ENCODE measurements at regions of chr1 and their contacts with region 1.

Region 1: GRCh38 chr1:26787706-26788514 is at the start of gene PIGV:
- DNase-seq: peak; percentile 93
- H3K4me3 ChIP-seq: peak within 1 kb of the TSS; percentile 51 to 76 (median 69)
- H3K27ac ChIP-seq: peak within 1 kb of the TSS; percentile 94 to 99 (median 96)
- H3K4me1 ChIP-seq: peaks cover 0 to 60% (median 48%) of the 10 kb centered on the region in 4 donors
- H3K27me3 ChIP-seq: no peaks in the 10 kb centered on the region
- CTCF ChIP-seq: peak in 2 of 4 experiments; percentile 42 to 47
- EP300 ChIP-seq: no peak
- POLR2A ChIP-seq: peak; percentile 90
- total RNA-seq, gene PIGV: 9.6 to 24.9 (median 14.1) TPM

Region 2: GRCh38 chr1:26500488-26501175 is 287.3 kb before region 1 on chr1:
- intact Hi-C with region 1: loop called (anchors 5 kb)
- DNase-seq: peak; percentile 92
- H3K4me3 ChIP-seq: peak overlapping the region; percentile 60 to 68 (median 63)
- H3K27ac ChIP-seq: peak overlapping the region; percentile 85 to 96 (median 89)
- H3K4me1 ChIP-seq: peaks cover 3 to 17% (median 9%) of the 10 kb centered on the region in 4 donors
- H3K27me3 ChIP-seq: no peaks in the 10 kb centered on the region
- CTCF ChIP-seq: no peak
- EP300 ChIP-seq: no peak
- POLR2A ChIP-seq: no peak

Region 3: DNA sequence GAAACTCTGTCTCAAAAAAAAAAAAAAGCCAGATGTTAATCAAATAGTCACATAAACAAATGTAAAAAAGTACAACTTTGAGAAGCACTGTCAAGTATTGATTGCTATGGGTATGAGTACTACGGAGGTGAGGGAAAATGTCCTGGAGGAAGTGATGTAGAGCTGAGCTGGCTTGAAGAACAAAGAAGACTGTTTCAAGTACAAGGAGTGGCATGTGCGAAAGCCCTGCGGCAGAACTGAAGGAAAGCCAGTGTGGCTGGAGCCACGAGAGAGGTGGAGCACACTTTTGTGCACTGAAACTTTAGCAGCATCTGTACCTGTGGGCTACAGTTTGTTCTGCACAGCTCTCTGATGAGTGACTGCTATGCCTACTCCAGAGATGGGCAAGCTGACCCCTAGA is 263.7 kb before region 1 on chr1:
- intact Hi-C with region 1: no loop called
- DNase-seq: no peak
- H3K4me3 ChIP-seq: no peak overlapping the region
- H3K27ac ChIP-seq: no peak overlapping the region
- H3K4me1 ChIP-seq: no peaks in the 10 kb centered on the region
- H3K27me3 ChIP-seq: peaks cover 0 to 15% (median 0%) of the 10 kb centered on the region in 3 donors
- CTCF ChIP-seq: no peak
- EP300 ChIP-seq: no peak
- POLR2A ChIP-seq: no peak

Region 4: DNA sequence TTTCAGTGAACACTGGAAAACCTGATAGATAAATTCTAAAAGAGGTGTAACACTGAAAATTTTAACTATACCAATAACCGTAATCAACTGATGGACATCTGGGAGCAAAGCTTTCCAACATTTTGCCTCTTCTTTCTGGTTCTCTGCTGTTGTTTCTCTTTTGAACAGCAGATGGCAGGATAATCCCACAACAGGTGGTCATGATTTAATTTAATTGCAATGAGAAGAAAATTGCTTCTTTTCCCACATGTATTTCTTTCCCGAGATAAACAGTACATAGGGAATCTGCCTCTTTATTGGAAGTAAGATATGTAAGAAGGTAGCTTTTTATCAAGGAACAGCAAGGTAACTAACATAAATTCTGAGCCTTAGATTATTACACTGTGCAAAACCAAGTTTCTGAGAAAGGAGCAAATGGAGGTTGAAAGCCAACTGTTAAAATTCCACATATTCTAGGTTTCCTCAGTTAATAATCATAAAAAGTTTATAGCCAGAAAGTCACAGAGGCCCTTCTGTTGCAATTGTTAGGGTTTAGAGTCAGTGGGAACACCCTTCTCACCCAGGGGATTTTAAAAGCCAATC is 185.4 kb before region 1 on chr1:
- intact Hi-C with region 1: loop called (anchors 1 kb)
- DNase-seq: no peak
- H3K4me3 ChIP-seq: no peak overlapping the region
- H3K27ac ChIP-seq: peak overlapping the region in 1 of 4 donors; percentile 51
- H3K4me1 ChIP-seq: no peaks in the 10 kb centered on the region
- H3K27me3 ChIP-seq: no peaks in the 10 kb centered on the region
- CTCF ChIP-seq: peak; percentile 79 to 93 (median 87)
- EP300 ChIP-seq: no peak
- POLR2A ChIP-seq: no peak

Region 5: GRCh38 chr1:26677306-26678115 is 110.4 kb before region 1 on chr1:
- intact Hi-C with region 1: loop called (anchors 1 kb)
- DNase-seq: peak; percentile 91
- H3K4me3 ChIP-seq: peak overlapping the region in 3 of 4 donors; percentile 5 to 16 (median 13)
- H3K27ac ChIP-seq: peak overlapping the region; percentile 49 to 56 (median 51)
- H3K4me1 ChIP-seq: peaks cover 0 to 14% (median 11%) of the 10 kb centered on the region in 4 donors
- H3K27me3 ChIP-seq: no peaks in the 10 kb centered on the region
- CTCF ChIP-seq: peak in 3 of 4 experiments; percentile 62 to 81 (median 76)
- EP300 ChIP-seq: no peak
- POLR2A ChIP-seq: no peak

Region 6: DNA sequence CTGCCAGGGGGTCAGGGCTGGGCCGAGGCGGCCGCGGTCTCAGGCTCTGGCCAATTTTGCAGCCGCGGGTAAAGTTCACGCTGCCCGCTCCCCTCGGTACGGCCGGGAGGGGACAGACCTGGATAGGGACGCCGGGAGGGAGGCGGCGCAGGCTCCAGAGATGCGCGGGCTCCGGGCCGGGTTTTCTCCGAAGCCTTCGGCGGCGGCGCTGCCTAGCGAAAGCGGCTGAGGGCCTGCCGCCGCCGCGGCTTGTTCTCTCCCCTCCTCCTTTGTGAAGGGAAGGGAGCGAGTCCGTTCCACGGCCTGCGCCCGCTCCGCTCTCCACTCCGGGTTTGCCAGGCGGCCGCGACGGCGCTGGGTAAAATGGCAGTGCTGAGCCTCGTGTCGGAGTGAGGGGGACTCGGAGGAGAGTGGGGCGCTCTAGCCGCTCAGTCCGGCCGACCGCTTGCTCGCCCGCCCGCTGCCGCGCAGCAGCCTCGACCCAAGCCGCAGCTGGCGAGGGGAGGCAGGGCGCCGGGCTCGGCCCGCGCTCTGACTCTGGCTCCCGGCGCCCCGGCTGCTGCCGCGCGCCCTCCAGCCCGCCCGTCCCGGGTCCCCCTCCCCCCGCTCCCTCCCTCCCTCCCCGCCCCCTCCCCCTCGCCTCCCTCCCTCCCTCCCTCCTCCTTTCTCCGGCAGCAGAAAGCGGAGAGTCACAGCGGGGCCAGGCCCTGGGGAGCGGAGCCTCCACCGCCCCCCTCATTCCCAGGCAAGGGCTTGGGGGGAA is 92.4 kb before region 1 on chr1 and contains the start of gene ARID1A:
- intact Hi-C with region 1: loop called (anchors 1 kb)
- DNase-seq: peak; percentile 98
- H3K4me3 ChIP-seq: peak within 1 kb of the TSS; percentile 89 to 98 (median 96)
- H3K27ac ChIP-seq: peak within 1 kb of the TSS; percentile 96 to 99 (median 99)
- H3K4me1 ChIP-seq: peaks cover 11 to 65% (median 53%) of the 10 kb centered on the region in 4 donors
- H3K27me3 ChIP-seq: no peaks in the 10 kb centered on the region
- CTCF ChIP-seq: no peak
- EP300 ChIP-seq: peak in 1 of 4 donors; percentile 50
- POLR2A ChIP-seq: peak in 1 of 2 donors; percentile 29
- total RNA-seq, gene ARID1A: 20.7 to 47.1 (median 24.7) TPM

Region 7: GRCh38 chr1:26744075-26744959 is 43.6 kb before region 1 on chr1:
- intact Hi-C with region 1: loop called (anchors 5 kb)
- DNase-seq: peak; percentile 82
- H3K4me3 ChIP-seq: no peak overlapping the region
- H3K27ac ChIP-seq: peak overlapping the region; percentile 19 to 71 (median 44)
- H3K4me1 ChIP-seq: peaks cover 0 to 63% (median 33%) of the 10 kb centered on the region in 4 donors
- H3K27me3 ChIP-seq: no peaks in the 10 kb centered on the region
- CTCF ChIP-seq: no peak
- EP300 ChIP-seq: no peak
- POLR2A ChIP-seq: no peak

Region 8: GRCh38 chr1:26864610-26865527 is 77.0 kb after region 1 on chr1:
- intact Hi-C with region 1: no loop called
- DNase-seq: peak; percentile 99
- H3K4me3 ChIP-seq: peak overlapping the region; percentile 38 to 64 (median 54)
- H3K27ac ChIP-seq: peak overlapping the region; percentile 89 to 98 (median 96)
- H3K4me1 ChIP-seq: peaks cover 0 to 22% (median 18%) of the 10 kb centered on the region in 4 donors
- H3K27me3 ChIP-seq: no peaks in the 10 kb centered on the region
- CTCF ChIP-seq: no peak
- EP300 ChIP-seq: no peak
- POLR2A ChIP-seq: peak; percentile 44 to 71

Measured in sigmoid colon (tissue), 7 donors.